CD14-positive monocyte (primary cell): ENCODE measurements at regions of chr3 and their contacts with region 1.

Region 1: DNA sequence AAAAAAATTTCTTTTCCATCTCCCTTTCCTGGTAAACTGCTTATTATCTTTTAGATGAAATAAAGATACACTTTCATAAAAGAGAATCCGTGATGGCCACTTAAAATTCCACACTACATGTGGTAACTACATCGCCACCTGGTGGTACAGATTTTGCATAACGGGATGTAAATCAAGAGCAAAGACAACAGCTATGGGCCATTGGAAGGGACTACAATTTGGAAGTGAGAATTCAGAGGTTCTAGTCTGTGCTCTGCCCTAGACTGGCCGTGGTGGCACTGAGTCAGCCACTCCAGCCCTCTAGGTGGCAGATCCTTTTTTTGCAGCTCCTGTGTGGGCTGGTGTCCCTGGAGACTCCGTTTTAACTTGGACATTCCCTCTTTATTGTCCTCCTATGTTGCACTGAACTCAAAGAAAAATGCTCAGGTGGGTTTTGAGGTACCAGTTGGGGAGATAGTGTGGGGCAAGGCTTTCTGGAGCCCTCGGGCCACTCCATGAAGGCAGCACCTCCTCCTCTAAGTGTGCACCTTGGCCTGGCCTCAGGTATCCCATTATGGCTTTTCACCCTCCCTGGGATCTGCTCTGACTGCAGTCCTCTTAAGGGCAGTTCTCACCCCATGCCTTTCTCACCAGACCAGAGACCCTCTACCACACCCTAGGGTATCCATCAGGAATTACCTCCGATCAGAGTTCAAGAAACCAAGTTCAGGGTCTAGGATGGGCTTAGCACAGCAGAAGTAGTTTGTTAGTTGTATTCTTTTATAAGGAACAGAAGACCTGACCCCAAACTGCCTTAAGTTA is 54.9 kb downstream of the SPSB4 start:
- DNase-seq: peak; percentile 22 to 55 (median 45)
- H3K4me3 ChIP-seq: no peak overlapping the region
- H3K4me3 Mint-ChIP-seq: no peak overlapping the region
- H3K27ac ChIP-seq: no peak overlapping the region
- H3K27ac Mint-ChIP-seq: no peak overlapping the region
- H3K4me1 ChIP-seq: no peaks in the 10 kb centered on the region
- H3K4me1 Mint-ChIP-seq: peaks cover 2% of the 10 kb centered on the region
- H3K27me3 ChIP-seq: no peaks in the 10 kb centered on the region
- H3K27me3 Mint-ChIP-seq: peaks cover 0 to 3% (median 1%) of the 10 kb centered on the region in 3 donors
- CTCF ChIP-seq: peak; percentile 82

Region 2: DNA sequence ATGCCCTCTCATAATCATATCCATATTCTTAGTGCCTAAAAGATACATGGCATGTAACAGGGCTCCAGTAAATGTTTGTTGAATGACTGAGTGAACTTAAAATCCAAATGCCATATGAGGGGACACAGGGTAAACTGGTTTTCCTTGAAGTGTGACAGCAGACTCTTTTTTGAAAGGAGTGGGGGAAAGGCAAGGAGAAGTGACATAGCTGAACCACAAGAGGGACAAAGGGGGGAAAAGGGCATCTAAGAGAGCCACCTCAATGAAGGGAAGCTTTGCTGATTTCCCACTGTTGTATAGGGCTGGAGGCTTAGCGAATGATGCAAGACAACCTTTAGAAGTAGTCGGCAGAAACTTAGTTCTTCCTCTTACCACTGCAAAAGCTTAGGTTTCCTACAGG is 419.1 kb before region 1 on chr3:
- intact Hi-C with region 1: no loop called
- DNase-seq: no peak
- H3K4me3 ChIP-seq: no peak overlapping the region
- H3K4me3 Mint-ChIP-seq: no peak overlapping the region
- H3K27ac ChIP-seq: no peak overlapping the region
- H3K27ac Mint-ChIP-seq: no peak overlapping the region
- H3K4me1 ChIP-seq: no peaks in the 10 kb centered on the region
- H3K4me1 Mint-ChIP-seq: no peaks in the 10 kb centered on the region
- H3K27me3 ChIP-seq: no peaks in the 10 kb centered on the region
- H3K27me3 Mint-ChIP-seq: no peaks in the 10 kb centered on the region
- CTCF ChIP-seq: no peak

Region 3: GRCh38 chr3:140898340-140899180 is 207.5 kb before region 1 on chr3:
- intact Hi-C with region 1: loop called (anchors 10 kb)
- DNase-seq: peak; percentile 17 to 35 (median 31)
- H3K4me3 ChIP-seq: no peak overlapping the region
- H3K4me3 Mint-ChIP-seq: no peak overlapping the region
- H3K27ac ChIP-seq: no peak overlapping the region
- H3K27ac Mint-ChIP-seq: no peak overlapping the region
- H3K4me1 ChIP-seq: no peaks in the 10 kb centered on the region
- H3K4me1 Mint-ChIP-seq: peaks cover 2% of the 10 kb centered on the region
- H3K27me3 ChIP-seq: no peaks in the 10 kb centered on the region
- H3K27me3 Mint-ChIP-seq: peaks cover 0 to 2% (median 0%) of the 10 kb centered on the region in 3 donors
- CTCF ChIP-seq: peak; percentile 74

Region 4: GRCh38 chr3:141000027-141000663 is 105.9 kb before region 1 on chr3:
- intact Hi-C with region 1: loop called in 1 of 2 experiments (anchors 10 kb)
- DNase-seq: peak in 2 of 3 donors; percentile 21 to 31
- H3K4me3 ChIP-seq: no peak overlapping the region
- H3K4me3 Mint-ChIP-seq: no peak overlapping the region
- H3K27ac ChIP-seq: no peak overlapping the region
- H3K27ac Mint-ChIP-seq: no peak overlapping the region
- H3K4me1 ChIP-seq: no peaks in the 10 kb centered on the region
- H3K4me1 Mint-ChIP-seq: no peaks in the 10 kb centered on the region
- H3K27me3 ChIP-seq: no peaks in the 10 kb centered on the region
- H3K27me3 Mint-ChIP-seq: peaks cover 0 to 5% (median 3%) of the 10 kb centered on the region in 3 donors
- CTCF ChIP-seq: peak; percentile 37

Region 5: DNA sequence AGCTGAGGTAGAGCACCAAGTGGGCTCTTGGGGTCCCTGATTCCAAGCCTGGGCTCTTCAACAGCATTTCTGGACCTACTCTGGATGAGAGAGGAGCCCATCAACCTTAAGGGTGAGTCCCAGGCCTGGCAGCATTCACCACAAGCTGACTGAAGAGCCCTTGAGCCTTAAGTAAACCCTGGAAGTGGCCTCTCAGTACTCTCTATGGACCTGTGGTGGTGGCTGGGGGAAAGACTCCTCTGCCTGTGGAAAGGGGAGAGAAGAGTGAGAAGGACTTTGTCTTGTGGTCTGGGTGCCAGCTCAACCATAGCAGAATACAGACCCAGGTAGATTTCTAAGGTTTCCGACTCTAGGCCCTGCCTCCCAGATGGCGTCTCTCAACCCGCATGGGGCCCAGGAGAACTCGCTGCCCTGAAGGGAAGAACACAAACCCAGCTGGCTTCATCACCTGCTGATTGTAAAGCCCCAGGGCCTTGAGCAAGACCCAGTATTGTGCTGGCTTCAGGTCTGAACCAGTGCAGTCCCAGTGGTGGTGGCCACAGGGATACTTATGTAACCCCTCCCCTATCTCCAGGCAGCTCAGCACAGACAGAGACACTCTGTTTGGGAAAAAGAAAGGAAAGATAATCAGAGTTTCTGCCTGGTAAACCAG is 971.9 kb after region 1 on chr3:
- intact Hi-C with region 1: no loop called
- DNase-seq: no peak
- H3K4me3 ChIP-seq: no peak overlapping the region
- H3K4me3 Mint-ChIP-seq: no peak overlapping the region
- H3K27ac ChIP-seq: no peak overlapping the region
- H3K27ac Mint-ChIP-seq: no peak overlapping the region
- H3K4me1 ChIP-seq: no peaks in the 10 kb centered on the region
- H3K4me1 Mint-ChIP-seq: no peaks in the 10 kb centered on the region
- H3K27me3 ChIP-seq: no peaks in the 10 kb centered on the region
- H3K27me3 Mint-ChIP-seq: no peaks in the 10 kb centered on the region
- CTCF ChIP-seq: no peak